ENCODE measurements at regions of chr2 and their contacts with region 1.

Region 1: GRCh38 chr2:38352336-38352735 is 24.7 kb downstream of the ATL2 start:
- DNase-seq: no peak
- ATAC-seq: peak; percentile 64
- H3K4me3 ChIP-seq: no peak overlapping the region
- H3K27ac ChIP-seq: no peak overlapping the region
- H3K4me1 ChIP-seq: peaks cover 4 to 11% of the 10 kb centered on the region in 2 experiments; a peak in 4 of 5 replicates
- H3K27me3 ChIP-seq: no peaks in the 10 kb centered on the region
- CTCF ChIP-seq: no peak
- EP300 ChIP-seq: no peak
- POLR2A ChIP-seq: no peak
- RAD21 ChIP-seq: no peak

Region 2: DNA sequence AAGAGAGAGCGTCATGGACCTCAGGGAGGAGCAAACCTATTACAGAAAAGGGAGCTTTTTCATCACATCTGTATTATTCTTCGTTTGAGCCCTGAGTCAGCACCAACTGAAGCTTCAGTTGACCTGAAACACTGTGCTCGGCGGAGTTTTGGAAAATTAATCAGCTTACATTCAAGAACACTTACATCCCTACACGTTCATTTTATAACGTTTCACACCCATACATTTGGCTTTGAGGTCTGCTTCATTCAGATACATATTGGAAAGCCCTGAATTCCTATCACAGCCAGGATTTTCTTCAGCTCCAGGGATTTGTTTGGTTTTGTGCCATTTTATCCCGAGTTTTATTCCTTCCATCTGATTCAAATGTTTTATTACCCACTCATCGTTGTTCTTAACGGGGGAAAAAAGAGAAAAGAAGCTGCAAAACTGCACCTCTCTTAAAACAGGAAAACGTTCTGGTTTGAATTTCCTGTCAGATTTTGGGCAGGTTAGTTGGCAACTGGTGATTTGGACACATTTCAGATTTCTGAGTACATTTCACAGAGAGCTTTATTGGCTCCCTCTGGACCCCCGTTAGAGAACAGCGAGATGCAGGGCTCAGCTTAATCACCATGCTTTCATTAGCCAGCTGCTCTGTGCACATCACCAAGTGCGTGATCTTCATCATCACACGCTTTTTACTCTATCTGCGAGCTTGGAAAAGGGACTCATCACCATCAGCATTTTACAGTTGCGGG is 769.7 kb before region 1 on chr2:
- CTCF ChIA-PET with region 1: no interaction called
- POLR2A ChIA-PET with region 1: no interaction called
- in situ Hi-C with region 1: no loop called
- intact Hi-C with region 1: no loop called
- DNase-seq: no peak
- ATAC-seq: no peak
- H3K4me3 ChIP-seq: no peak overlapping the region
- H3K27ac ChIP-seq: no peak overlapping the region
- H3K4me1 ChIP-seq: peaks cover 0 to 34% of the 10 kb centered on the region in 2 experiments; a peak in 4 of 5 replicates
- H3K27me3 ChIP-seq: no peaks in the 10 kb centered on the region
- CTCF ChIP-seq: no peak
- EP300 ChIP-seq: no peak
- POLR2A ChIP-seq: no peak
- RAD21 ChIP-seq: no peak

Region 3: GRCh38 chr2:38277245-38278116 is 74.9 kb before region 1 on chr2:
- CTCF ChIA-PET with region 1: no interaction called
- POLR2A ChIA-PET with region 1: no interaction called
- in situ Hi-C with region 1: no loop called
- intact Hi-C with region 1: no loop called
- DNase-seq: no peak
- ATAC-seq: no peak
- H3K4me3 ChIP-seq: no peak overlapping the region
- H3K27ac ChIP-seq: no peak overlapping the region
- H3K4me1 ChIP-seq: no peaks in the 10 kb centered on the region; a peak in 1 of 5 replicates
- H3K27me3 ChIP-seq: peaks cover 12 to 21% of the 10 kb centered on the region in 2 experiments; a peak in 3 of 5 replicates
- CTCF ChIP-seq: no peak
- EP300 ChIP-seq: no peak
- POLR2A ChIP-seq: no peak
- RAD21 ChIP-seq: no peak

Region 4: DNA sequence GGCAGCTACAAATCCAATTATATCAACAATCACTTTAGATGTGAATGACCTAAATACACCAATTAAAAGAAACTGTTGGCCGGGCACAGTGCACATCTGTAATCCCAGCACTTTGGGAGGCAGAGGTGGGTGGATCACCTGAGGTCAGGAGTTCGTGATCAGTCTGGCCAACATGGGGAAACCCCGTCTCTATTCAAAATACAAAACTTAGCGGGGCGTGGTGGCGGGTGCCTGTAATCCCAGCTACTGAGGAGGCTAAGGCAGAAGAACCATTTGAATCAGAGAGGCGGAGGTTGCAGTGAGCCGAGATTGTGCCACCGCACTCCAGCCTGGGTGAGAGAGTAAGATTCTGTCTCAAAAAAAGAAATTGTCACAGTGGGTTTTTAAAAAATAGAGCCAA is 24.8 kb before region 1 on chr2:
- CTCF ChIA-PET with region 1: no interaction called
- POLR2A ChIA-PET with region 1: no interaction called
- in situ Hi-C with region 1: no loop called
- intact Hi-C with region 1: no loop called
- DNase-seq: no peak
- ATAC-seq: no peak
- H3K4me3 ChIP-seq: no peak overlapping the region
- H3K27ac ChIP-seq: no peak overlapping the region
- H3K4me1 ChIP-seq: 0 out of 5 replicates have a peak, but pooled peaks cover 3 to 5% of the 10 kb centered on the region in 2 experiments
- H3K27me3 ChIP-seq: no peaks in the 10 kb centered on the region
- CTCF ChIP-seq: no peak
- EP300 ChIP-seq: no peak
- POLR2A ChIP-seq: no peak
- RAD21 ChIP-seq: no peak

Region 5: DNA sequence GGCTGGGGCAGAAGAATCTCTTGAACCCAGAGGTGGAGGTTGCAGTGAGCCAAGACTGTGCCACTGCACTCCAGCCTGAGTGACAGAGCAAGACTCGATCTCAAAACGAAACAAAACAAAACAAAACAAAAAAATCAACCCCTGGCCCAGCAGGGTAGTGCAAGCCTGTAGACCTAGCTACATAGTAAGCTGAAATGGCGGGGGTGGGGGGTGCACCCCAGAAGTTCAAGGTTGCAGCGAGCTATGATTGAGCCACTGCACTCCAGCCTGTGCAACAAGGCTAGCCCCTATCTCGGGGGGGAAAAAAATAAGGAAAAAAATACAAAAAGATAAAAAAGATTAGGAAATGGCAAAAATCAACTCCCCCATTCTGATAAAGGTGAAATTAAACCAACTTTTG is 18.3 kb after region 1 on chr2:
- CTCF ChIA-PET with region 1: no interaction called
- POLR2A ChIA-PET with region 1: interaction called, 15 read pairs
- in situ Hi-C with region 1: no loop called
- intact Hi-C with region 1: no loop called
- DNase-seq: peak in 2 of 4 experiments; percentile 21 to 28
- ATAC-seq: peak; percentile 42
- H3K4me3 ChIP-seq: no peak overlapping the region
- H3K27ac ChIP-seq: no peak overlapping the region
- H3K4me1 ChIP-seq: peaks cover 11 to 44% of the 10 kb centered on the region in 2 experiments
- H3K27me3 ChIP-seq: no peaks in the 10 kb centered on the region
- CTCF ChIP-seq: no peak
- EP300 ChIP-seq: no peak
- POLR2A ChIP-seq: no peak
- RAD21 ChIP-seq: no peak

Measured in K562 (cell line).